Activated CD4-positive, alpha-beta T cell treated with anti-CD3 and anti-CD28 coated beads, Interleukin-2, amount 10 ng/mL, durations not matched to agents 24 days and 14 days (primary cell): ENCODE measurements at regions of chr5 and their contacts with region 1.

Region 1: DNA sequence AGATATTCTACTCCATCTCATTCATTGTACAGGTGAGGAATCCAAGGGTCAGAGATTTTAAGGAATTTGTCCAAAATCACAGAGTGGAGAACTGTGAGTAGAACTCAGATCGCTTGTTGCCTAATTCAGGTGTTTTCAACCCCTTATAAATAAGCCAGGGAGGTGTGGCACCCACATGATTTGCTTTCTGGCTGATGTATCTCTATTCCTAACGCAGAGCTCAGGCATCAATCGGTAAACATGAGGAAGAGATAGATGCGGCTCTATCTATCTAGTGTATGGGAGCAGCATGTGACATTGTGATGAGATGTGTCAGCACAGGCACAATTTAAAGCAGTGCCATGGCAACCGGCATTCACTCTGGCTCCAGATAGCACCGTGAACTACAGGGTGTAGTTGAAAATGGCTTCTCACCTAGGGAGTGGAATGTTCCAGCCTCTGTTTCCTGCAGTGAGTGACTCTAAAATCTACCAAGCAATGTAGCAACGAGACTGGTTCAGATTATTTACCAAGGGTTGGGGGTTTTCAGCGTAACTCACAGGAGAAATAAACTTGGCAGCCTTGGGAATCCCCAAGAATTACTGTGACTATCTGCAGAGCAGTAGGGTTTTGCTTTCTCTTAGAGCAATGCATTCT is 53.4 kb upstream of the SUB1 start:
- DNase-seq: peak; percentile 89
- H3K4me3 Mint-ChIP-seq: peak overlapping the region; percentile 93
- H3K27ac Mint-ChIP-seq: peak overlapping the region; percentile 97
- H3K4me1 Mint-ChIP-seq: peaks cover 45% of the 10 kb centered on the region
- H3K27me3 Mint-ChIP-seq: no peaks in the 10 kb centered on the region

Region 2: DNA sequence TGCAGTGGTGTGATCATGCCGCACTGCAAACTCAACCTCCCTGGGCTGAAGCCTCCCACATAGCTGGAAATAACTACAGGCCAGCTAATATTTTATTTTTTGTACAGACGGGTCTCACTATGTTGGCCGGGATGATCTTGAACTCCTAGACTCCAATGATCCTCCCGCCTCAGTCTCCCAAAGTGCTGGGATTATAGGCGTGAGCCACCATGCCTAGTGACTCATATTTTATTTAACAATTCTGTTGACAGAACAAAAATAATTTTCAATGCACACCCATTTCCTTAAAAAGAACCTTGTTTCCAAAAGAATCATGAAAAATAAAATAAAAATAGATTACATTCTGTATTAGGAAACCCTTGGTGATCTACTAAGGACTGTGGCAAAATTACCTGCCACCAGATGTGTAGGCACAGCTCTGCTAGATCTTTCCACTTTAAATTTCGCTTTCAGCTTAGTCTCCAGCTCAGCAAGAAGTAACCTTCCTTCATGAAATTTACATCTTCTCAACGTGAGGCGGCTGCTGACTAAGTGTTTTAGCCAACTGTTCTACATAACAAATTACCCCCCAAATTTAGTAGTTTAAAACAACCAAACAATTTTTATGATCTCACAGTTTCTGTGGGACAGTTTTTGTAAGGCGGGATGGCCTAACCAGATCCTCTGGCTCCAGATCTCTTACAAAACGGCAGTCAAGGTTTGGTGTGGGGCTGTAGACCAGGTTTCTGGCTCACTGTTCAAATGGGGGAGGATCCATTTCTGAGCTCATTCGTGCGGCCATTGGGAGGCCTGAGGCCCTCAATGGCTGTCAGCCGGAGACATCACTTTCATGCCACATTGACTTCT is 325.3 kb before region 1 on chr5:
- intact Hi-C with region 1: loop called (anchors 5 kb)
- DNase-seq: no peak
- H3K4me3 Mint-ChIP-seq: no peak overlapping the region
- H3K27ac Mint-ChIP-seq: peak overlapping the region; percentile 62
- H3K4me1 Mint-ChIP-seq: peaks cover 17% of the 10 kb centered on the region
- H3K27me3 Mint-ChIP-seq: no peaks in the 10 kb centered on the region

Region 3: DNA sequence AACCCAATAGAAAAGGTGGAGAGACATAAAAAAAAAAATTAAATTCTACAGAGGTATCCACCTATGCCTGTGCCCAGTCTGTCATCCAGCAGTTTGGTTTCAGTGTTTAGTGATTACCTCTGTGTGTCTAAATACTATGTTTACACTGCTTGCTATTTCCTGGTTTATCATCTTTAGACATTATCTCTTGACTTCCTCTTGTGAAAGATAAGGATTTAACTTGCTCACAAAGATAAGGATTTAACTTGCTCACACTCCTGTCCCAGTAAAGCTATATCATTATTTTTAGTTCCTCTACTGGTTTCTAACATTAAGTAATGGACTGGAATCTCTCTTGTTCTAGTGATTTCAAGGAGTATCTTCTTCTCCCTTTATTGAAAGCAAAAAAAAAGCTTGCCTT is 33.5 kb before region 1 on chr5:
- intact Hi-C with region 1: loop called (anchors 5 kb)
- DNase-seq: no peak
- H3K4me3 Mint-ChIP-seq: no peak overlapping the region
- H3K27ac Mint-ChIP-seq: no peak overlapping the region
- H3K4me1 Mint-ChIP-seq: peaks cover 23% of the 10 kb centered on the region
- H3K27me3 Mint-ChIP-seq: peaks cover 1% of the 10 kb centered on the region

Region 4: DNA sequence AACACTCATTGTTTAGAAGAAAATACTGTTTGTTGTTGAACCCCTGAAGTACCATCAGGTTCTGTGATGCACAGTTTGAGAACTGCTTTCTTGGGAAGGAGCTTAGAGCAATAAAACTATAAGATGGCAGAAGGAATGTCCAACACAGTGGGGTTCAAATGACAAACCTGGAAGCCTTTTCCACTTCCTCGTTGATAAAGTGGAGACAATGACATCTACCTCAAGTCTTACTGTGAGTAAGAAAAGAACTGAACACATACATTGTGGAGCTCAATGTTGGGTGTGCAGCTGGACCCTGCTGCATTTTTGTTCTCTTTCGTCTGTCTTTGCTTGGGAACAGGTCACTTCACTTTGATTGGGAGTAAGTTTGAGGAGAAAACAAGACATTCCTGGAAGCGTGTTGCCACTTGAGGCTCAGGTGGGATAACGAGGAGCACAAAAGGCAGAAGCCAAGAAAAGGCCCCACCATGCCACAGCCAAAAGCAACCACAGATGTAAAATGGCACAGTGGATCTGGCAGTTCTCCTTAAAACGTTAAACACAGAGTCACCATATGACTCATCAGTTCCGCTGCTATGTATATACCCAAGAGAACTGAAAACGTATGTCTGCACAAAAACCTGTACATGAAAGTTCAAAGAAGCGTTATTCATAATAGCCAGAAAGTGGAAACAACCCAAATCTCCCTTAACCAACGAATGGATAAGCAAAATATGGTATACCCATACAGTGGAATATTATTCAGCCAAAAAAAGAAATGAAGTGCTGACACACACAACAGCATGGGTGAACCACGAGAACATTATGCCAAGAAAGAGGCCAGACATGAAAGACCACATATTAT is 10.4 kb after region 1 on chr5:
- intact Hi-C with region 1: loop called (anchors 1 kb)
- DNase-seq: peak; percentile 85
- H3K4me3 Mint-ChIP-seq: peak overlapping the region; percentile 57
- H3K27ac Mint-ChIP-seq: peak overlapping the region; percentile 91
- H3K4me1 Mint-ChIP-seq: peaks cover 46% of the 10 kb centered on the region
- H3K27me3 Mint-ChIP-seq: no peaks in the 10 kb centered on the region

Region 5: GRCh38 chr5:32552936-32553335 is 20.9 kb after region 1 on chr5:
- intact Hi-C with region 1: no loop called
- DNase-seq: no peak
- H3K4me3 Mint-ChIP-seq: no peak overlapping the region
- H3K27ac Mint-ChIP-seq: no peak overlapping the region
- H3K4me1 Mint-ChIP-seq: peaks cover 16% of the 10 kb centered on the region
- H3K27me3 Mint-ChIP-seq: no peaks in the 10 kb centered on the region